Activated CD8-positive, alpha-beta T cell treated with anti-CD3 and anti-CD28 coated beads for 36 hours (primary cell): ENCODE measurements at regions of chr19 and their contacts with region 1.

Region 1: DNA sequence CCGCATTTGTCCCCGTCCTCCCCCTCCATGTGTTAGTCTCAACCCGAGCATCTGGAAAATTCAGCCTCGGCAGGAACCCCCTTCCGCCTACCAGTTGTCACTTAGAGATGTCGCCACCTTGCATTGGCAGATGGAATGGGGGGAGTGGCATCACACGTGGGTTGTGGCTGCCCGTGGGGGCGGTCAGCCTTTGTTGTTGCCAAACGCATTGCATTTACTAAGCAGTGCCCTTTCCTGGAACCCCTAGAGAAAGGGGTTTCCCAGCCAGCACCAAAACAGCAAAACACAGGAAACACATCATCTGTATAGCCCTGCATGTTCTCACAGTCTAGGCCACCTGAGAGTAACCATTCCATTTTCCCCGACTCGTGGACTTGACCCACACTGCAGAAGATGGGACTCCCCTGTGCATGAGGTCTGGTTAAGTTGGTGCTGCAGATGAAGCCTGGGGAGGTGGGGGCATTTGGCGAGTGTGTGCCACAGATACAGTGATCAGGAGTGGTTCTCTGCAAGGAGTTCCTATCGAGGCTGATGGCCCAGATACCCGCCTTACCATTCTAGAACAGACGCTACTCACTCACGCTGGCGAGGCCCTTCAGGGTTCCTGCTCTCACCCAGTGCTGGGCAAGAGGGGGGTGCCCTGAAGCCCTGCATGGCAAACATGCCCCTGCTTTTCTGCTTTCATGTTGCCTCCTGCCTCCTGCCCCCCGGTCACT is 38.3 kb downstream of the TMED1 start:
- DNase-seq: peak; percentile 99
- ATAC-seq: peak; percentile 90
- H3K4me3 Mint-ChIP-seq: peak overlapping the region; percentile 64
- H3K27ac Mint-ChIP-seq: peak overlapping the region; percentile 96
- H3K4me1 Mint-ChIP-seq: peaks cover 32% of the 10 kb centered on the region
- H3K27me3 Mint-ChIP-seq: no peaks in the 10 kb centered on the region
- CTCF ChIP-seq: no peak

Region 2: GRCh38 chr19:10835754-10836477 is 38.2 kb after region 1 on chr19 and contains the start of gene TMED1:
- CTCF ChIA-PET with region 1: no interaction called
- POLR2A ChIA-PET with region 1: interaction called, 12 read pairs
- intact Hi-C with region 1: no loop called
- DNase-seq: peak; percentile 100
- ATAC-seq: peak; percentile 92
- H3K4me3 Mint-ChIP-seq: peak within 1 kb of the TSS; percentile 98
- H3K27ac Mint-ChIP-seq: peak within 1 kb of the TSS; percentile 99
- H3K4me1 Mint-ChIP-seq: peaks cover 16% of the 10 kb centered on the region
- H3K27me3 Mint-ChIP-seq: no peaks in the 10 kb centered on the region
- CTCF ChIP-seq: no peak
- total RNA-seq, gene TMED1: 12.9 to 15.0 TPM